Activated CD4-positive, alpha-beta T cell treated with anti-CD3 and anti-CD28 coated beads, Interleukin-2, amount 10 ng/mL, durations not matched to agents 24 days and 14 days (primary cell): ENCODE measurements at regions of chrX and their contacts with region 1.

Region 1: GRCh38 chrX:154515878-154516655 is at the start of gene FAM3A:
- DNase-seq: peak; percentile 97
- H3K4me3 Mint-ChIP-seq: peak within 1 kb of the TSS; percentile 90
- H3K27ac Mint-ChIP-seq: peak within 1 kb of the TSS; percentile 93
- H3K4me1 Mint-ChIP-seq: peaks cover 23% of the 10 kb centered on the region
- H3K27me3 Mint-ChIP-seq: no peaks in the 10 kb centered on the region
- total RNA-seq, gene FAM3A: 36.5 and 38.0 TPM in 2 replicates

Region 2: GRCh38 chrX:153780678-153781427 is 735.2 kb before region 1 on chrX and contains the start of gene SRPK3:
- intact Hi-C with region 1: no loop called
- DNase-seq: no peak
- H3K4me3 Mint-ChIP-seq: no peak within 1 kb of the TSS
- H3K27ac Mint-ChIP-seq: no peak within 1 kb of the TSS
- H3K4me1 Mint-ChIP-seq: no peaks in the 10 kb centered on the region
- H3K27me3 Mint-ChIP-seq: peaks cover 6% of the 10 kb centered on the region
- total RNA-seq, gene SRPK3: not detected in 2 replicates

Region 3: DNA sequence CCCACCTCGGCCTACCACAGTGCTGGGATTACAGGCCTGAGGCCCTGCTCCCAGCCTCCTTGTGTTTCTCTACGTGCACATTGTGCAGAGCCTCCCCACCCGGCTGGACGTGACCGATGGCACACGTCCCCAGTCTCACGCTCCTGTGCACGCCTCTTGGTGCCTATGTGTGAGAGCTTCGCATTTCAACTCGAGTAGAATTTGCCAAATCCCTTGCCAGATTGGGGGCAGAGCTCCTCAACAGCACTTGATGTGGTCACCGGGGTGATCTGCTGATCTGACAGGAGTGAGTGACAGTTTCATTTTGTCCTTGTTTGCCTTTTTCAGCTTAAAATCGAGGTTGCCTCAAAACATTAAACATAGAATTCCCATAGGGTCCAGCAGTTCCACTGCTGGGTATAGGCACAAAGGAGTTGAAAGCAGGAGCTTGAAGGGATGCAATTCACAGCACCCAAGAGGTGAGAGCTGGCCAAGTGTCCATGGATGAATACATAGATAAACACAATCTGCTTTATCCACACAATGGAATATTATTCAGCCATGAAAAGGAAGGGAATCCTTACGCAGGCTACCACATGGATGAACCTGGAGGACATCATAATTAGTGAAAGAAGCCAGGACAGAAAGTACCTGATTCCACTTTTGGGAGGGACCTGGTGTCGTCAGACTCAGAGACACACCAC is 526.0 kb before region 1 on chrX:
- intact Hi-C with region 1: no loop called
- DNase-seq: peak; percentile 59
- H3K4me3 Mint-ChIP-seq: no peak overlapping the region
- H3K27ac Mint-ChIP-seq: peak overlapping the region; percentile 41
- H3K4me1 Mint-ChIP-seq: peaks cover 3% of the 10 kb centered on the region
- H3K27me3 Mint-ChIP-seq: no peaks in the 10 kb centered on the region

Region 4: GRCh38 chrX:154378782-154379591 is 137.1 kb before region 1 on chrX and contains the start of gene EMD:
- intact Hi-C with region 1: loop called (anchors 10 kb)
- DNase-seq: peak; percentile 98
- H3K4me3 Mint-ChIP-seq: peak within 1 kb of the TSS; percentile 88
- H3K27ac Mint-ChIP-seq: peak within 1 kb of the TSS; percentile 92
- H3K4me1 Mint-ChIP-seq: peaks cover 14% of the 10 kb centered on the region
- H3K27me3 Mint-ChIP-seq: no peaks in the 10 kb centered on the region
- total RNA-seq, gene EMD: 91.7 and 92.8 TPM in 2 replicates

Region 5: GRCh38 chrX:154443992-154444754 is 71.9 kb before region 1 on chrX and contains the start of gene FAM50A:
- intact Hi-C with region 1: no loop called
- DNase-seq: peak; percentile 93
- H3K4me3 Mint-ChIP-seq: peak within 1 kb of the TSS; percentile 80
- H3K27ac Mint-ChIP-seq: peak within 1 kb of the TSS; percentile 80
- H3K4me1 Mint-ChIP-seq: peaks cover 8% of the 10 kb centered on the region
- H3K27me3 Mint-ChIP-seq: no peaks in the 10 kb centered on the region
- total RNA-seq, gene FAM50A: 85.4 and 85.9 TPM in 2 replicates